ENCODE measurements at regions of chr2 and their contacts with region 1.

Region 1: DNA sequence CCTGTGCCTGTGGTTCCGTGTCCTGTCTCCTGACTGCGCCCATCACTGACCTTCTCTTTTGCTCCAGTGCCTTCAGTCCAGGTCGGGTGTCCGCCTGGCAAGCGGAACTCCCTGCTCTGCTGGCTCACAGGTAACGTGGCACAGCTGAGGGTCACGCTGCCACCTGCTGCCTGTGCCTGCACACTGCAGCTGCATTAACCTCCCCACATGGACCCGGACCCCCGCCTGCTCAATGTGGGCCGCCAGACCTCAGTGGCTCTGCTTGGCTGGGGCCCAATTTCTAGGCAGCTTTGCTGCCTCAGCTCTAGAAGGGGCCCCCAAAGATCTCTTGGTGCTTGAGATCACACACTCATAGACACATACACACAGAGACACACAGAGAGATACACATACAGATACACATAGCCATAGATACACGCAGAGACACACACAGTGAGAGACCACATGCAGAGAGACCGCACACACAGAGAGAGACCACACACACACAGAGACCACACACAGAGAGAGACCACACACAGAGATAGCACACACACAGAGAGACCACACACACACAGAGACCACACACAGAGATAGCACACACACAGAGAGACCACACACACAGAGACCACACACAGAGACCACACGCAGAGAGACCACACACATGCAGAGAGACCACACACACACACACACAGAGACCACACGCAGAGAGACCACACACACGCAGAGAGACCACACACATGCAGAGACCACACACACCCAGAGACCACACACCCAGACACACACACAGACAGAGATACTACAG is 14.9 kb upstream of the CNNM3 start:
- DNase-seq: peak; percentile 67
- ATAC-seq: peak; percentile 98
- H3K4me3 Mint-ChIP-seq: no peak overlapping the region
- H3K27ac Mint-ChIP-seq: no peak overlapping the region
- H3K4me1 Mint-ChIP-seq: peaks cover 5% of the 10 kb centered on the region
- H3K27me3 Mint-ChIP-seq: no peaks in the 10 kb centered on the region
- CTCF ChIP-seq: no peak

Region 2: DNA sequence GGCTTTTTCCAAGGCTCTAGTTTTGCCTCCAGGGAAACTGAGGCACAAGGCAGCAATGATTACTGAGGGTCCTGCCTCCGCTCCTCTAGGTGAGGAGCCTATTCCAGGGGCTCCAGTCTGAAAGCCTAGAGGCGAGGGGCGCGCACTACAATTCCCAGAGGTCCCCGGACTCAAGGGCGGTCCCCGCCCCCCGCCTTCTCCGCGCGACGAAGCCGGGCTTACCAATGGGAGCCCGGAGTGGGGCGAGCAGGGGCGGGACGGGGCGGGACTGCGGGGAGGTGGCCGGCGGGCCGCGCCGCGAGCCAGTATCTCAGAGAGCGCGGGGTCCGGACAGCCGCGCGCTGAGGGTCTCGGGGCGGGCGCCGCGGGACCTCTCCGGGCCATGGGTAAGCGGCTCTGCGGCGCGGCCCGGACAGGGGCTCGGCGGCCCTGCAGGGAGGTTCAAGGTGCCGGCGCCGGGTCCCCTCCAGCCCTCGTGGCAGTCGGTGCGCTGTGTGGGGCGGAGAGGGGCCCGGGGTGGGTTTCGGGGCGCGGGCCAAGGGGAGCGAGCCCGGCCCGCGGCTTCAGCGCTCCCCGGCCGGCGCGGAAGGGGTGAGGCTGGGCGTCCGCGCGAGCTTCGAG is 264.6 kb before region 1 on chr2 and contains the start of gene ARID5A:
- CTCF ChIA-PET with region 1: interaction called, 3 read pairs
- POLR2A ChIA-PET with region 1: no interaction called
- intact Hi-C with region 1: loop called (anchors 5 kb)
- DNase-seq: peak; percentile 79
- ATAC-seq: peak; percentile 74
- H3K4me3 Mint-ChIP-seq: peak within 1 kb of the TSS; percentile 91
- H3K27ac Mint-ChIP-seq: peak within 1 kb of the TSS; percentile 90
- H3K4me1 Mint-ChIP-seq: peaks cover 53% of the 10 kb centered on the region
- H3K27me3 Mint-ChIP-seq: no peaks in the 10 kb centered on the region
- CTCF ChIP-seq: no peak
- total RNA-seq, gene ARID5A: 73.4 and 83.5 TPM in 2 replicates

Region 3: GRCh38 chr2:96638144-96639121 is 162.8 kb before region 1 on chr2 and contains the start of gene KANSL3:
- CTCF ChIA-PET with region 1: no interaction called
- POLR2A ChIA-PET with region 1: interaction called, 4 read pairs
- intact Hi-C with region 1: loop called (anchors 1 kb)
- DNase-seq: peak; percentile 94
- ATAC-seq: peak; percentile 90
- H3K4me3 Mint-ChIP-seq: peak within 1 kb of the TSS; percentile 93
- H3K27ac Mint-ChIP-seq: peak within 1 kb of the TSS; percentile 87
- H3K4me1 Mint-ChIP-seq: peaks cover 36% of the 10 kb centered on the region
- H3K27me3 Mint-ChIP-seq: no peaks in the 10 kb centered on the region
- CTCF ChIP-seq: no peak
- total RNA-seq, gene KANSL3: 24.6 and 31.4 TPM in 2 replicates

Region 4: GRCh38 chr2:96739633-96740428 is 61.4 kb before region 1 on chr2 and contains the start of gene LMAN2L:
- CTCF ChIA-PET with region 1: interaction called, 3 read pairs
- POLR2A ChIA-PET with region 1: no interaction called
- intact Hi-C with region 1: loop called (anchors 1 kb)
- DNase-seq: peak; percentile 88
- ATAC-seq: peak; percentile 99
- H3K4me3 Mint-ChIP-seq: peak within 1 kb of the TSS; percentile 98
- H3K27ac Mint-ChIP-seq: peak within 1 kb of the TSS; percentile 94
- H3K4me1 Mint-ChIP-seq: peaks cover 33% of the 10 kb centered on the region
- H3K27me3 Mint-ChIP-seq: no peaks in the 10 kb centered on the region
- CTCF ChIP-seq: no peak
- total RNA-seq, gene LMAN2L: 7.1 and 8.9 TPM in 2 replicates

Region 5: GRCh38 chr2:96816128-96816835 is 15.1 kb after region 1 on chr2 and contains the start of gene CNNM3:
- CTCF ChIA-PET with region 1: interaction called, 10 read pairs
- POLR2A ChIA-PET with region 1: interaction called, 20 read pairs
- intact Hi-C with region 1: loop called (anchors 1 kb)
- DNase-seq: peak; percentile 97
- ATAC-seq: peak; percentile 93
- H3K4me3 Mint-ChIP-seq: peak within 1 kb of the TSS; percentile 88
- H3K27ac Mint-ChIP-seq: peak within 1 kb of the TSS; percentile 83
- H3K4me1 Mint-ChIP-seq: peaks cover 56% of the 10 kb centered on the region
- H3K27me3 Mint-ChIP-seq: no peaks in the 10 kb centered on the region
- CTCF ChIP-seq: no peak
- total RNA-seq, gene CNNM3: 19.0 and 20.3 TPM in 2 replicates

Measured in activated B cell treated with CpG ODN at 0.5 μM for 24 hours (primary cell).